OCI-LY7 (cell line): ENCODE measurements at regions of chr5 and their contacts with region 1.

Region 1: GRCh38 chr5:40688127-40688761 is 8.5 kb downstream of the PTGER4 start:
- DNase-seq: peak; percentile 84
- H3K4me3 ChIP-seq: no peak overlapping the region
- H3K27ac ChIP-seq: no peak overlapping the region
- H3K4me1 ChIP-seq: no peaks in the 10 kb centered on the region
- CTCF ChIP-seq: peak; percentile 94

Region 2: DNA sequence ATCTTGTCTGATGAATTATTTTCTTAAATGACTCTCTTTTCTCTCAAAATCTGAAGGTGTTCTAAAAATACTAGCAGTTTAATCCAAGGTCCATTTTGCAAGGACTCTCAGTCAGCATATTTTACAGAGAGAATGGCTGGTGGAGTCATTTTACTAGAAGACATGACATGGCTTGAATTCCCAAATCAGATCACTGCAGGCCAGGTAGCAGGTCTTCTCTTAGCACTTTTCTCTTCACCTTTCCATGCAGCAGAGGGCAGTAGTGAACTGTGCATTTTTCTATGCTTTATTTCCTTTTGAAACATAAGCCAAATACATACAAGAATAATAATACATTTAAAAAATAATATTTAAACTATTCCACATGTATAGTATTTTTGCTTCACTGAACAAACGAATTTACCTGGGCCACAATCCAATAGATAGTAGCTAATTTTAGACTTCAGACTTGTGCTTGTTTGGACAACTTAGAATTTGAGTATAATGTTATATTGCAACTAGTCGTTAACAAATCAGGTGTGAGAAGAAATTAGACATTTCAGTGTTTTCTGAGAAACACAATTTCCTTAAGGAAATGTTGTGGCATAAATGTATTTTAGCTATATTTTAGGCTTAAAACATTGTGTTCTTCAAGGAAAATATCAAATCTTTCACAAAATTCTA is 974.1 kb before region 1 on chr5:
- CTCF ChIA-PET with region 1: no interaction called
- POLR2A ChIA-PET with region 1: no interaction called
- intact Hi-C with region 1: loop called (anchors 1 kb)
- DNase-seq: peak; percentile 39
- H3K4me3 ChIP-seq: no peak overlapping the region
- H3K27ac ChIP-seq: no peak overlapping the region
- H3K4me1 ChIP-seq: no peaks in the 10 kb centered on the region
- CTCF ChIP-seq: peak; percentile 77

Region 3: GRCh38 chr5:40021007-40021406 is 667.2 kb before region 1 on chr5:
- CTCF ChIA-PET with region 1: no interaction called
- POLR2A ChIA-PET with region 1: no interaction called
- intact Hi-C with region 1: loop called (anchors 2 kb)
- DNase-seq: peak; percentile 10
- H3K4me3 ChIP-seq: no peak overlapping the region
- H3K27ac ChIP-seq: no peak overlapping the region
- H3K4me1 ChIP-seq: no peaks in the 10 kb centered on the region
- CTCF ChIP-seq: peak; percentile 46; the same call in 1 of the 2 replicates

Region 4: DNA sequence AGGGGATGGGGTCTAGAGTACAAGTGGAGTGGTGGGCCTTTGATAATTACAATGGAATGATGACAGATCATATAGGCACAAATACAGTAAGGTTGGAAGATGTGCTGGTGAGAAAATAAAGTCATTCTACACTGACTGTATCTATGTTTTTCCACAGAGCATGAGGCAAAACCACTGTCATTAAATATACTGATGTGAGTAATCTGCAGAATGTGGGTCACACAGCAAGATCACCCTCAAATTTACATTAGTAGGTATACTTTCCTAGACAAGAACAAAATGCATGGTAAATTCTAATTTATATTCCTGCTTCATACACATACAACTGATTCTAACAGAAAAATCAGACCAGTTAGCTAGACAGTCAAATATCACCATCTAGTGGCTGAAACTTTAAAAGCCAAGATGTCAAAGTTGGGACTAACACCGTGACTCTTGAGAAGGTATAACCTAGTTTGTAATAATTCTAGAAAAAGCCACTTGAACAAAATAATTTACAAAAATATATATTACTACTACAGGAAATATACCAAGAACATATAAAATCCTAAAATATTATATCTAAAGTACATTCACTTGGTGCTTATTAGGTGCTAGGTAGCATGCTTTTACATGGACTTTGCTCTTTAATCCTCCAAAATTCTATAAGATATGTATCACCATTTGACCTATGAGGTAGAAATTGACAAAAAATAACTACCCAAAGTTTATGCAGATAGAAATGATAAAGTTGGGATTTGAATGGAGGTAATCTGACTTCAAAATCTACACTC is 48.0 kb after region 1 on chr5:
- CTCF ChIA-PET with region 1: no interaction called
- POLR2A ChIA-PET with region 1: no interaction called
- intact Hi-C with region 1: loop called (anchors 5 kb)
- DNase-seq: peak; percentile 56
- H3K4me3 ChIP-seq: no peak overlapping the region
- H3K27ac ChIP-seq: no peak overlapping the region
- H3K4me1 ChIP-seq: no peaks in the 10 kb centered on the region
- CTCF ChIP-seq: peak; percentile 92